ENCODE measurements at regions of chr12 and their contacts with region 1.

Region 1: DNA sequence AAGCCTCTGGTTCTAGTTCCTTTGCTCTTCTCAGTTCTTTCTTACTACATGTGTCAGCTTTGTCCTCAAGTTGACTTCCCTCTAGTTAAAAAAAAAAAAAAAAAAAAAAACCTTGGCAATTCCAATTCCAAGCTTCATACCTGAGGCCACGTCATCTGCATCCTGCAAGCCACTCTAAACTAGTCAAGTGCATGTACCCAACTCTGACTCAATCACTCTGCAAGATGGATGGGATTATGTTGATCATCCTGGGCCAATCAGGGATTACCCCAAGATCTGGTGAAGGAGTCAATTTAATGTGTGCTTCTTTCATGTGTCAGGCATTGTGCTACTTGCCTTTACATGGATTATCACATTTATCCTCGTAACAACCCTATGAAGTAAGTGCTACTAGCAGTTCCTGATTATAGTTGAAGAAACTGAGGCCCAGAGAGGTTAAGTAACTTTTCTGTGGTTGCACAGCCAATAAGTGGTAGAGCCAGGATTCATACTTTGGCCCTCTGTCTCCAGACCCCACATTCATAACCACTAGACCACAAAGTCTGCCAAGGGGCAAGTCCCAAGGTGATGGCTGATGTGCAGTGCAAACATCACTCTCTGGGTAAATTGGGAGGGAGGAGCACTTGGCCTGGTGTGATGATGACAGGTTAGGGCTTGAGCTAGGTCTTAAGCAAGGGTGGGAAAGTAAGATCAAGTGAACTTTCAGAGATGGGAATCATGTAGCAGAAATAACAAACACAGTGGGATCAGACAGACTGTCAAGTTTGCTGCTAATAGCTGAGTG is 17.3 kb upstream of the CCND2 start:
- DNase-seq: no peak

Region 2: DNA sequence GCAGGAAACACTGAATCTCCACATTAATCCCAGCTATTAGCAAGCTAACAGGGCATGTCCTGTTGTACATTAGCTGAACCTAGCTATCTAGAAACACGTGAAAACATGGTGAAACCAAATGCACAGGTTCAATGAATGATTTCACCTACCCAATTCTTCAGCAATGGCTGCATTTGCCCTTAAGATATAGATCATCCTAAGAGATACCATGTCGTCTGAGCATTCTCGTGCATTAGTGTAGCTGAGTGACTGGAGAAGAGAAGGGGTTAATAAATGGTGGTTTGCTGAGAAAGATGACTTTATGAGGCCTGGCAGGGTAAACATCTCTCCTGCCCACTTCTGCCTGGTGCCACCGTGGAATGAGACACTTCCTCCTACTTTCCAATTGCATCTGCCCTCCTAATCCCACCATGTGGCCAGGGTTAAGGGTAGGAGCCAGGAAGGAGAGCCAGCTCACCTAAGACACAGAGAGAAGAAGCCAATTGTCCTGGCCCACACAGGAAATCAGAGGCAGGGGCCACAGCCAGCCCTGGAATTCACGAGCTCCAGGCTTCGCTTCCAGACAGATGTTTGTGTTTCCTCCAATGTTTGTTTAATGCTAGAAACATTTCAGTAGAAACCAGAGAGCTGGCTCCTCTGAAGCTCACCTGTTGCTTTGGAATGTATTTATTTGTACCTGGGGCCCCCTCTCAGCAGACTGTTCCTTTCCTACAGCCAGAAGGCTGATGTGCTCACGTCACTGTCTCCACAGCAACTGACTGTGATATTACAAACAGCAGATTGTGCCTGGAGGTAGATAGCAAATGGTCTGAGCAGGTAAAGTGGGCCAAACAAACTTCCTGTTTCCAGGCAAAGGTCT is 257.0 kb before region 1 on chr12:
- intact Hi-C with region 1: loop called (anchors 5 kb)
- DNase-seq: no peak

Measured in posterior cingulate gyrus (tissue), 11 donors.